Psoas muscle (tissue), 8 donors: ENCODE measurements at regions of chr6 and their contacts with region 1.

Region 1: GRCh38 chr6:170049641-170050561 is 241.0 kb downstream of the DLL1 start:
- DNase-seq: peak; percentile 89 to 94
- ATAC-seq: peak; percentile 89 to 92 (median 92)
- H3K4me3 ChIP-seq: no peak overlapping the region
- H3K27ac ChIP-seq: peak overlapping the region; percentile 24
- H3K4me1 ChIP-seq: peaks cover 19% of the 10 kb centered on the region
- H3K27me3 ChIP-seq: peaks cover 0 to 6% (median 3%) of the 10 kb centered on the region in 3 donors
- CTCF ChIP-seq: no peak

Region 2: DNA sequence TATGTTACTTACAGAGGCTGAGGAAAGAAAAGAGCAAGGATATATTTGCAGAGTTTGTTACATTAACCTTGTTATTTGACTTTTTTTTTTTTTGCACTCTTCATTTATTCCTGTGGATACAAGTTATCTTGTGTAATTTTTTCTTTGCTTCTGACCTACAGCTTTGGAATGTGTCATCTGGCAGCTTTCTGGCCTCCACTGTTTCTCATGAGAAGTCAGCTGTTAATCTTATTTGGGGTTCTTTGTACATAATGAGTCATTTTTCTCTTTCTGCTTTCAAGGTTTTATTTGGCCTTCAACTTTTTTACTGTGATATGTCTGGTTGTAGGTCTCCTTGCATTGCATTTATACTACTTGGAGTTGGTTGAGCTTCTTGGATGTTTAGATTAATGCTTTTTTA is 1275.5 kb before region 1 on chr6:
- intact Hi-C with region 1: no loop called
- DNase-seq: no peak
- ATAC-seq: no peak
- H3K4me3 ChIP-seq: no peak overlapping the region
- H3K27ac ChIP-seq: no peak overlapping the region
- H3K4me1 ChIP-seq: no peaks in the 10 kb centered on the region
- H3K27me3 ChIP-seq: peaks cover 0 to 14% (median 5%) of the 10 kb centered on the region in 3 donors
- CTCF ChIP-seq: no peak

Region 3: GRCh38 chr6:170003027-170003426 is 46.9 kb before region 1 on chr6:
- intact Hi-C with region 1: no loop called
- DNase-seq: no peak
- ATAC-seq: peak in 1 of 4 donors; percentile 16
- H3K4me3 ChIP-seq: no peak overlapping the region
- H3K27ac ChIP-seq: no peak overlapping the region
- H3K4me1 ChIP-seq: no peaks in the 10 kb centered on the region
- H3K27me3 ChIP-seq: no peaks in the 10 kb centered on the region
- CTCF ChIP-seq: peak; percentile 10

Region 4: GRCh38 chr6:170129691-170130171 is 79.8 kb after region 1 on chr6:
- intact Hi-C with region 1: loop called in 1 of 2 experiments (anchors 5 kb)
- DNase-seq: peak; percentile 65 to 89
- ATAC-seq: peak; percentile 82 to 91 (median 86)
- H3K4me3 ChIP-seq: no peak overlapping the region
- H3K27ac ChIP-seq: peak overlapping the region; percentile 68
- H3K4me1 ChIP-seq: peaks cover 25% of the 10 kb centered on the region
- H3K27me3 ChIP-seq: no peaks in the 10 kb centered on the region
- CTCF ChIP-seq: no peak